Transverse colon (tissue), 4 donors: ENCODE measurements at regions of chr15 and their contacts with region 1.

Region 1: DNA sequence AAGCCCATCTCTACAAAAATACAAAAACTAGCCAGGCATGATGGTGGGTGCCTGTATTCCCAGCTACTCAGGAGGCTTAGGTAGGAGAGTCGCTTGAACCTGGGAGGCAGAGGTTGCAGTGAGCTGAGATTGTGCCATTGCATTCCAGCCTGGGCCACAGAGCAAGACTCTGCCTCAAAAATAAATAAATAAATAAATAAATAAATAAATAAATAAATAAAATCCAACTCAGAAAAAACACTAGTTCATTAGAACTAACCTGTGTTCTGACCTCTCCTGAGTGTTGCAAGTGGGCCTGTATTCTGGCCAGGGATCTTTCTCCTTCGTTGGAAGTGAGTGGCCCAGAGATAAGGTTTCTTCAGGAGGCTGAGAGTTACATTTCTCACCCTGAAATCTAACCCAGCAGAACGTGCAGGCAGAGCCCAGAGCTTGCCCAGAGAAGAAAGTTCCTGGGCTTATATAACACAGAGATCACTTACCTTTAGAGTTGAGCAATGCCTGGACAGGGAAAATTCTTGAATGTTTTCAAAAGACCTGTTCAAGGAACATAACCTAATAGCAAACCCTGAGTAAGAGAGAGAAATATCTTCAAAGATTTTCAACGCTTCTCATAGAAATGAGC is 583.9 kb downstream of the MCTP2 start:
- DNase-seq: no peak
- H3K4me3 ChIP-seq: no peak overlapping the region
- H3K27ac ChIP-seq: no peak overlapping the region
- H3K4me1 ChIP-seq: no peaks in the 10 kb centered on the region
- H3K27me3 ChIP-seq: no peaks in the 10 kb centered on the region
- CTCF ChIP-seq: no peak
- EP300 ChIP-seq: no peak
- POLR2A ChIP-seq: no peak

Region 2: DNA sequence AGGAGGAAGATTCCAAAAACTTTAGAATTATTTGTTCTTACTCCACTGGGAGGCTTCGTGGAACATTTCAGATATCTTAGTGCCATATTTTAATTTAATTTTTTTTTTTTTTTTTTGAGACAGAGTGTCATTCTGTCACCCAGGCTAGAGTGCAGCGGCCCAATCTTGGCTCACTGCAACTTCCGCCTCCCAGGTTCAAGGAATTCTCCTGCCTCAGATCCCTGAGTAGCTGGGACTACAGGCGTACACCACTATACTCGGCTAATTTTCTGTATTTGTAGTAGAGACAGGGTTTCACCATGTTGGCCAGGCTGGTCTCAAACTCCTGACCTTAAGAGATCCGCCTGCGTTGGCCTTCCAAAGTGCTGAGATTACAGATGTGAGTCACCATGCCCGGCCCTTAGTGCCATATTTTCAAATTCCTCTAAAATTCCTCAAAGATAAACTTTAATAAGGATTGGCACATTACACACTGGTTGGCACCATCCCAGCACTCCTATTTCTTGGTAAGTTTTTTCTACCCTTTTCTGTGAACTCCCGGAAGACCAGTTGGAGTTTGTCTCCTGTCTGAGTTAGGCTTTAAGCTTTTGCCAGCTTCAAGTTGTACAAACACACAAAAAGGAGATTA is 109.9 kb after region 1 on chr15:
- in situ Hi-C with region 1: loop called in 1 of 4 experiments (anchors 25 kb)
- intact Hi-C with region 1: no loop called
- DNase-seq: no peak
- H3K4me3 ChIP-seq: no peak overlapping the region
- H3K27ac ChIP-seq: no peak overlapping the region
- H3K4me1 ChIP-seq: no peaks in the 10 kb centered on the region
- H3K27me3 ChIP-seq: no peaks in the 10 kb centered on the region
- CTCF ChIP-seq: no peak
- EP300 ChIP-seq: no peak
- POLR2A ChIP-seq: no peak